Posterior cingulate gyrus (tissue), 11 donors: ENCODE measurements at regions of chr3 and their contacts with region 1.

Region 1: GRCh38 chr3:197791113-197791891 is at the start of gene LRCH3:
- DNase-seq: peak; percentile 74 to 97 (median 82)

Region 2: DNA sequence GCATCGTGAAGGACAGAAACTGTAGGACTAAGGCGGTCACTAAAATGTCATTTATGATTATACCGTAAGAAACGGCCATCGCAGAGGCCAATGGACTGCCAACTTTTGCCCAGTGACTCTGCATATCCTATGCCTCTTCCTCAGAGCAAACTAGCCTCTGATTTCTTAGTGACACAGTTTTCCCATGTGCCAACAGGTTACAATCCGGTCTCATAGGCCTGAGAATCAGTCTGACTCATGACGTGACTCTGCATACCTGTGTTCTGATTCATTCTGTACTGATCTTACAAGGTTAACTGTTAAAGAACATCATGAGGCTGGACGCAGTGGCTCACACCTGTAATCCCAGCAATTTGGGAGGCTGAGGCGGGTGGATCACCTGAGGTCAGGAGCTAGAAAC is 72.4 kb before region 1 on chr3:
- intact Hi-C with region 1: no loop called
- DNase-seq: no peak

Region 3: DNA sequence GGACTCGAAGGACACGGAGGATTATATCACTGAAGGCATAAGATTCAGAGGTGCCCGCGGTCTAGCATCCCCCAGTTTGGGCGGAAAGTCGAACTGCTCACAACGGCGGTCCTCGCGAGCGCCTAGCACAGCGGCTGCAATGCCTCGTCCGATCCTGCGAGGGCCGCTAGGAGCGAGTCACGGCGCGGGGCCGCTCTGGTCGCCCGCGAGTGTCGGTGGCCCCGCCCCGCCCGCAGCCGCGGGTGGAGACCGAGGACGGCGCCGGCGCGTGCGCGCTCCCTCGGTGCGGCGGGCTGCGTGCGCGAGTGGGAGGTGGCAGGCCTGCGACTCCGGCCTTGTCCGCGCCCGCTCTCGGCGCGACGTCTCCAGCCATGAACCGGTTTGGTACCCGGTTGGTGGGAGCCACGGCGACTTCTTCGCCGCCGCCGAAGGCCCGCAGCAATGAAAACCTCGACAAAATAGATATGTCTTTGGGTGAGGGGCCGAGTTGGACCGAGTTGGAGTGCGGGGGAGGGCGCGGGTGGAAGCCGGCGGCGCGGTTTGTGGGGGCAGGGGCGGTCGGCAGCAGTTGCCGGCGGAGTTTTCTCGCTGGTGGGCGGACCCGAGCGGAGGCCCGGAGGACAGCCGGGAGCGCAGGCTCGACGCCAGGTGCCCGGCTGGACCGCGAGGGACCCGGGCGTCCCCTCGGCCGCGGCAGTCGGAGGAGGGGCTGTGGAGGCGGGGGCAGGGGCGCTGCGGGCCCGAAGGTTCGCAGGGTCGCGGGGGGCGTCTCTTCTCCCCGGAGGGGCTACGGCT is 41.5 kb before region 1 on chr3 and contains the start of gene FYTTD1:
- intact Hi-C with region 1: loop called (anchors 5 kb)
- DNase-seq: peak; percentile 85 to 99 (median 94)

Region 4: DNA sequence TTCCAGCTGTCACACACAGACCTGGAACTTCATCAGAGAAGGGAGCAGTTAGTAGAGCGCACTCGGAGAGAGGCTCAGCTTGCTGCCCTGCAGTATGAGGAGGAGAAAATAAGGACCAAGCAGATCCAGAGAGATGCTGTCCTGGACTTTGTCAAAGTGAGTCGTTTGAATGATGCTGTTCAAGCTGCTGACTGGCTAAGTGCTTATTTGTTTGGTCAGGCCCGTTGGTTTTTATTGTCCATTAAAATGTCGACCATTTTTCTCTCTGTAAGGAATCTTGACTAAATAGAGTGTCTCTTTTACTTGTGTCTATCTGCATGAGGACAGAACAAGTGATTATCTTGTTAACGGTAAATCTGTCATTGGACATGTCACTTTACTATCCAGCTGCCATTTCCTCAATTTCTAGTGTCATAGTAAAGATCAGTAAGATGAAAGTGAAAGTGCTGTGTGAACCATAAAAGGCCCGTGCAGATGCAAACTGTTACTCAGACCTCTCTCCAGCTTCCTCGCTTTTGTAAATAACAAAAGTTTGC is 56.6 kb after region 1 on chr3:
- intact Hi-C with region 1: loop called (anchors 5 kb)
- DNase-seq: no peak